HCT116 (cell line): ENCODE measurements at regions of chr15 and their contacts with region 1.

Region 1: DNA sequence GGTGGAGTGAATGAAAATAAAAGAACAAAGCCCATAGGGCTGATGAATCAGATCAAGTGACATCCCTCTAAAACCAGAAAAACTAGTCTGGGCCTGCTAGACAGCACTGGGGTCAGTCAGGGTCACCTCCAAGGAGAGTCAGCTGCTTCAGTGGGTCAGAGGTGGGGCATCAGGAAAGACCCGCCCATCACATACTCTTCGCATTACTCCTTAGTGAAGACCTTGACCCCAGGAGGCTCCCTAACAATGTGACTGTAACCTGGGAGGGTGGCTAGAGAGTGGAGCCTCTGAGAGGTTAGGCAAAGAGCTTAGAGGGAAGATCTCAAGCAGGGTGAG is 12.9 kb downstream of the PPCDC start:
- DNase-seq: peak; percentile 72
- ATAC-seq: peak; percentile 74
- H3K4me3 ChIP-seq: peak overlapping the region in 1 of 2 experiments; percentile 20; a peak in 1 of 4 replicates
- H3K27ac ChIP-seq: 0 out of 2 replicates have a peak overlapping the region, but pooled peaks have one; percentile 13
- H3K4me1 ChIP-seq: peaks cover 41 to 45% of the 10 kb centered on the region in 2 experiments
- H3K27me3 ChIP-seq: no peaks in the 10 kb centered on the region
- CTCF ChIP-seq: no peak
- POLR2A ChIP-seq: no peak
- RAD21 ChIP-seq: no peak

Region 2: GRCh38 chr15:74995241-74995778 is 41.0 kb before region 1 on chr15 and contains the start of gene SCAMP5:
- CTCF ChIA-PET with region 1: no interaction called
- POLR2A ChIA-PET with region 1: no interaction called
- RAD21 ChIA-PET with region 1: no interaction called
- intact Hi-C with region 1: no loop called
- DNase-seq: peak; percentile 87
- ATAC-seq: peak; percentile 99
- H3K4me3 ChIP-seq: peak within 1 kb of the TSS; percentile 50 to 60
- H3K27ac ChIP-seq: no peak within 1 kb of the TSS; the same call in 1 of the 2 replicates
- H3K4me1 ChIP-seq: peaks cover 0 to 5% of the 10 kb centered on the region in 2 experiments; a peak in 1 of 4 replicates
- H3K27me3 ChIP-seq: peaks cover 11% of the 10 kb centered on the region; the same call in 1 of the 2 replicates
- CTCF ChIP-seq: no peak
- POLR2A ChIP-seq: no peak
- RAD21 ChIP-seq: no peak
- total RNA-seq, gene SCAMP5: 6.2 TPM

Region 3: DNA sequence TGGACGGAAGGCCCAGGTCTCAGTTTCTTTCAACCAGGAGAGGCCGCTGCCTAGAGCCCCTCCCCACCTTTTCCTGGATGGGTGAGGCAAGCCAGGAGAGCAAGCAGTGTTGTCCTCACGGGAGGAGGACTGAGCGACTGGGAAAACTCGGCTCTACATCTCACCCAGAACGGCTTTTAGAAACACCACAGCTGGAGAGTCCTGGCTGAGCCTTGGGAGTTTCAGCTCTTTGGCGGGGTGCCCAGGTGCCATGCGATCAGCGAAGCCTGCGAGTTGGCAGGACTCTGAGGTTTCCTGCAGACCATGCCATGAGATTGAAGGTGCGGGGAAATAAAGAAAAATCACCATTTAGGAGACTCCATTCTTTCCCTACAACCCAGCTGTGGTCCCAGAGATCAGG is 13.1 kb after region 1 on chr15:
- CTCF ChIA-PET with region 1: no interaction called
- POLR2A ChIA-PET with region 1: no interaction called
- RAD21 ChIA-PET with region 1: no interaction called
- intact Hi-C with region 1: no loop called
- DNase-seq: no peak
- ATAC-seq: no peak
- H3K4me3 ChIP-seq: no peak overlapping the region
- H3K27ac ChIP-seq: no peak overlapping the region
- H3K4me1 ChIP-seq: peaks cover 13 to 15% of the 10 kb centered on the region in 2 experiments; a peak in 3 of 4 replicates
- H3K27me3 ChIP-seq: no peaks in the 10 kb centered on the region
- CTCF ChIP-seq: no peak
- POLR2A ChIP-seq: no peak
- RAD21 ChIP-seq: no peak

Region 4: DNA sequence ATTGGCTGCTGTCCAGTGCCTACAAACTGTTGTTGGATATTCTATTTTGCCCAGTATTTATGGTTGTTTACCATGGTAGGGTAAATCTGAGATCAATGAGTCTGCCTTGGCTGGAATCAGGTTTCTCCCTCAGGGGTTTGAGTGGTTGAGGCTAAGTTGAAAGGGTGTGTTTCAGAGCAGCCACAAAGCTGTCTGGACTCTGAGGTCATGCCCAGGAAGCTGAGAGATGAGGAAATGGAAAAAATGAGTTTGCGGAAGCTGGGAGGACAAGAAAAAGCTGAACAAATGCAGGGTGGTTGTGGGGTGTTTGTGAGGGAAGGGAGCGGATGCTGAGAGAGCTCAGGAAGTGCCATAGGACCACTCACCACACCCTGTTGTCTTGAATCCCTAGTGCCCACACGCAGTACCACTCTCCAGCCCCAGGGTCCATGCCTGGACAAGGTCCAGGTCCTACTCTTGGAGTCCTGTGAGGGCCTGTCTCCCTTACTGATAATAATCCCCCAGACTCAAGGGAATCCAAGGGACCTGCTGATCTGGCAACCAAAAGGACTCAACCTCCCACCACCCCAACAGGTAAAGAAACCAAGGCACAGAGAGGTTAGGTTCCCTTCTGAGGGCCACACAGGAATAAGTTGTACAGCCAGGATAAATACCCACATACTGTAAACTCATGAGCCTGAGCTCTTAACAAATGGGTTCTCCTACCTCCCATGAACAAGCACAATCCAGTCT is 68.7 kb after region 1 on chr15:
- CTCF ChIA-PET with region 1: no interaction called
- POLR2A ChIA-PET with region 1: no interaction called
- RAD21 ChIA-PET with region 1: no interaction called
- intact Hi-C with region 1: loop called (anchors 5 kb)
- DNase-seq: peak; percentile 88
- ATAC-seq: peak; percentile 67
- H3K4me3 ChIP-seq: peak overlapping the region in 1 of 2 experiments; percentile 9; a peak in 1 of 4 replicates
- H3K27ac ChIP-seq: peak overlapping the region; percentile 36
- H3K4me1 ChIP-seq: peaks cover 53 to 57% of the 10 kb centered on the region in 2 experiments
- H3K27me3 ChIP-seq: no peaks in the 10 kb centered on the region
- CTCF ChIP-seq: no peak; a peak in 1 of 6 replicates
- POLR2A ChIP-seq: no peak
- RAD21 ChIP-seq: no peak